HEK293 (cell line): ENCODE measurements at regions of chr11 and their contacts with region 1.

Region 1: GRCh38 chr11:67613960-67614715 is 7.4 kb downstream of the NDUFV1 start:
- H3K4me3 ChIP-seq: peak overlapping the region; percentile 16; the same call in 1 of the 2 replicates
- H3K27ac ChIP-seq: no peak overlapping the region
- H3K4me1 ChIP-seq: no peaks in the 10 kb centered on the region
- CTCF ChIP-seq: peak; percentile 72

Region 2: GRCh38 chr11:67572747-67573419 is 41.3 kb before region 1 on chr11:
- CTCF ChIA-PET with region 1: interaction called, 17 read pairs
- POLR2A ChIA-PET with region 1: no interaction called
- H3K4me3 ChIP-seq: no peak overlapping the region
- H3K27ac ChIP-seq: no peak overlapping the region
- H3K4me1 ChIP-seq: no peaks in the 10 kb centered on the region
- CTCF ChIP-seq: peak; percentile 30; the same call in 1 of the 2 replicates

Region 3: GRCh38 chr11:67583247-67584204 is 30.6 kb before region 1 on chr11 and contains the start of gene GSTP1:
- CTCF ChIA-PET with region 1: interaction called, 13 read pairs
- POLR2A ChIA-PET with region 1: interaction called, 5 read pairs
- H3K4me3 ChIP-seq: peak within 1 kb of the TSS; percentile 72
- H3K27ac ChIP-seq: peak within 1 kb of the TSS; percentile 66; the same call in 1 of the 2 replicates
- H3K4me1 ChIP-seq: no peaks in the 10 kb centered on the region
- CTCF ChIP-seq: no peak

Region 4: GRCh38 chr11:67630228-67630942 is 16.2 kb after region 1 on chr11:
- CTCF ChIA-PET with region 1: interaction called, 53 read pairs
- POLR2A ChIA-PET with region 1: interaction called, 9 read pairs
- H3K4me3 ChIP-seq: peak overlapping the region; percentile 70
- H3K27ac ChIP-seq: no peak overlapping the region
- H3K4me1 ChIP-seq: no peaks in the 10 kb centered on the region
- CTCF ChIP-seq: peak; percentile 88

Region 5: DNA sequence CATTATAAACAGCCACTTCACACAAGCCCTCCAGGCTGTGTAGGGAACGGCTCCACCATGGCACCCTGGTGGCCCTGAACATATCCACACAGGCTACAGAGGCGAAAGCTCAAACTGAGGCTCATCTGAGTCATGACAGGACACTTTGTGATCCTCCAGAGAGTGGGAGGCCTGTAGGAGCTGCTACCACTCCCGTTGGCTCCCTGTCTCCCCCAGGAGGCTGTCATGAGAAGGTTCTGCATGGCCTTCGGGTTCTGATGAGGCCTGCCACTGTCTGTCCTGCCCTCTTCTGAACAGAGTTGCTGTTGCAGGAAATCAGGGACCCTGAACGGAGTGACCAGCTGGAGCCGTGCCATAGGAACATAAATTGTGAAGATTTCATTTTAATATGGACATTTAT is 84.1 kb after region 1 on chr11:
- CTCF ChIA-PET with region 1: no interaction called
- POLR2A ChIA-PET with region 1: no interaction called
- H3K4me3 ChIP-seq: no peak overlapping the region
- H3K27ac ChIP-seq: no peak overlapping the region
- H3K4me1 ChIP-seq: 0 out of 2 replicates have a peak, but pooled peaks cover 2% of the 10 kb centered on the region
- CTCF ChIP-seq: no peak